Pancreas (tissue), 10 donors: ENCODE measurements at regions of chr3 and their contacts with region 1.

Region 1: GRCh38 chr3:73848173-73848906 is 223.6 kb upstream of the PDZRN3 start:
- DNase-seq: no peak
- ATAC-seq: peak in 3 of 4 donors; percentile 51 to 75 (median 69)
- H3K4me3 ChIP-seq: no peak overlapping the region
- H3K27ac ChIP-seq: no peak overlapping the region
- H3K4me1 ChIP-seq: no peaks in the 10 kb centered on the region
- H3K27me3 ChIP-seq: no peaks in the 10 kb centered on the region
- CTCF ChIP-seq: peak; percentile 20 to 40 (median 36)

Region 2: DNA sequence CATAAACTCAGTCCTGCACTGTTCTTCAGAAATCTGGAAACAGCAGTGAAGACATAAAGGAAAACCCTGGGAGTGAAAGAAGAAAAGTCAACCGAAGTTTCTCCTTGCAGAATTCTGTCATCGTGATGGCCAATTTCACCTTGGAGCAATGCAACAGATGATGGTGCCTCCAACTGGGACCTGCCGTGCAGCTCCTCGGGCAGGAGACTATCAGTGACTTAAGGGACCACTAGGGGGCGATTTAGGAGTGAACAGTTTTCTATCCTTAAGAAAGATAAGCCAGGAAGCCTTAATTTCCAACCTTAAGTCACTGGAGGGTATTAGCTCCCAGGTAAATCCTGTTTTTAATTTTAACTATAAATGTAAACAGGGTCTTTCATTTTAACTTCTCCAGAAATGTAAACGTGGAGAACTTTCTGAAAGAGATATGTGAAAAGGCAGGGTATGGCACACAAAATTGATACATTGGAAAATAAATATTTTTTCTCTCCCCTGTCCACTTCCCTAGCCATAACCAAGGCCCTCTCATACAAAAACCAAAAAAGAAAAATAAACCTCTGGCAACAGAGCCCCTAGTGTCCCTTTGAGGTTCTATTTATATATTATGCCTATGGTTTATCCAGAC is 339.9 kb before region 1 on chr3:
- intact Hi-C with region 1: loop called in 2 of 3 experiments (anchors 5 to 10 kb)
- DNase-seq: peak in 4 of 6 donors; percentile 35 to 64 (median 50)
- ATAC-seq: peak; percentile 71 to 86 (median 78)
- H3K4me3 ChIP-seq: no peak overlapping the region
- H3K27ac ChIP-seq: no peak overlapping the region
- H3K4me1 ChIP-seq: peaks cover 0 to 15% (median 11%) of the 10 kb centered on the region in 3 donors
- H3K27me3 ChIP-seq: no peaks in the 10 kb centered on the region
- CTCF ChIP-seq: peak; percentile 65 to 81 (median 72)

Region 3: DNA sequence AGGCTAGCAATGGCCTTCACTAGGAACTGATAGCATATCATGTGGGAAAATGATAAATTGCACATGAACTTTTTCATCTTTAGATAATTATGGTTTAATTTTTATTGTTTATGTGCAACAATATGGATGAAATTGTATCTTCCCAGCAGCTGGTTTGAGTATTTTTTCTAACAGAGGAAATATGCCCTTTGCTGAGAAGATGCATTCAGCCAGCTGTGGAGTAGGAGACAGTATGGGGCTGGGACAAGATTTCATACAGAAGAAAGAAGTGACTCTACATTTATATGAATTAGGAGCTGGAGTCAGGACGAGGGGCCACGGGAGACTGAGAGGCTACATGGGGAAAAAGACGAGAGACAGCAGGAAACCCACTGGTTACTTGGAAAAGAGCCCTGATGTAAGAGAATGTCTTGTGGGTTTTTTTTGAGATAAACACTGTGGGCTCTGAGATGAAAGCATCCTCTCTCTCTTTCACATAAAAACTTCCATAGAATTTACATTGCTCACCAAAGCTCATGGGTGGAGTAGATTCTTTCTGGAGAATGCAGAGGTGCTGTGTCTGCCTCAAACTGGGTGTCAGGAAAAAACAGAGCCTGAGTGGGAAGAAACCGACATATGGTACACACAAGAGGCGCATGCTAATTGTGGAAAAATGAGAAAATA is 108.4 kb before region 1 on chr3:
- intact Hi-C with region 1: no loop called
- DNase-seq: no peak
- ATAC-seq: no peak
- H3K4me3 ChIP-seq: no peak overlapping the region
- H3K27ac ChIP-seq: no peak overlapping the region
- H3K4me1 ChIP-seq: no peaks in the 10 kb centered on the region
- H3K27me3 ChIP-seq: no peaks in the 10 kb centered on the region
- CTCF ChIP-seq: no peak